Aorta (tissue), 5 donors: ENCODE measurements at regions of chr6 and their contacts with region 1.

Region 1: GRCh38 chr6:32984605-32985389 is 16.4 kb downstream of the BRD2 start:
- DNase-seq: peak; percentile 93 to 96
- ATAC-seq: peak; percentile 84
- H3K4me3 ChIP-seq: no peak overlapping the region
- H3K27ac ChIP-seq: no peak overlapping the region
- H3K4me1 ChIP-seq: no peaks in the 10 kb centered on the region
- H3K27me3 ChIP-seq: no peaks in the 10 kb centered on the region

Region 2: GRCh38 chr6:32829495-32829894 is 155.3 kb before region 1 on chr6:
- intact Hi-C with region 1: no loop called
- DNase-seq: no peak
- ATAC-seq: no peak
- H3K4me3 ChIP-seq: no peak overlapping the region
- H3K27ac ChIP-seq: no peak overlapping the region
- H3K4me1 ChIP-seq: no peaks in the 10 kb centered on the region
- H3K27me3 ChIP-seq: no peaks in the 10 kb centered on the region

Region 3: DNA sequence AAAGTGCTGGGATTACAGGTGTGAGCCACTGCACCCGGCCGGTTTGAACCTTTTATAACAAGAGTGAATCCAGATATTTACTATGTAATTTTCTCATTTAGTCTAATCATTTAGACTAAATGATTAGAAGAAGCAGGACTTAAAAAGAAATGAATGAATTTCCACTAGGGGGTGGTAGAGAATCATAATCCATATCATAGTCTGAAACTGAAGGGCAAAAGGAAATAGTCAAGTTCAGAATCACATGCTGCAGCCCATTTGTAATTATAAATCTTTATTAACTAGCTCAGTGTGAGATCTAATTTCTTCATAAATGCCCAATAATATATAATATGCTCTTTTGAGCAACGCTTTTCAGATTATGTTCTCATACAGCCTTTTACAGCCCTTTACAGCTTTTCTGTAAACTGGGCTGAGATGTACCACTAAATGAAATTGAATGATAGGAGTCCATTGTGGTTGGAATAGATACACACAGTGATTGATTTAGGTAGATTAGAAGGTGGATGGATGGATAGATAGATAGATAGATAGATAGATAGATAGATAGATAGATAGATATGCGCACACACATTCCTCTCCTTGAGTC is 99.0 kb before region 1 on chr6:
- intact Hi-C with region 1: loop called (anchors 1 to 2 kb)
- DNase-seq: no peak
- ATAC-seq: peak; percentile 69
- H3K4me3 ChIP-seq: no peak overlapping the region
- H3K27ac ChIP-seq: no peak overlapping the region
- H3K4me1 ChIP-seq: no peaks in the 10 kb centered on the region
- H3K27me3 ChIP-seq: no peaks in the 10 kb centered on the region

Region 4: DNA sequence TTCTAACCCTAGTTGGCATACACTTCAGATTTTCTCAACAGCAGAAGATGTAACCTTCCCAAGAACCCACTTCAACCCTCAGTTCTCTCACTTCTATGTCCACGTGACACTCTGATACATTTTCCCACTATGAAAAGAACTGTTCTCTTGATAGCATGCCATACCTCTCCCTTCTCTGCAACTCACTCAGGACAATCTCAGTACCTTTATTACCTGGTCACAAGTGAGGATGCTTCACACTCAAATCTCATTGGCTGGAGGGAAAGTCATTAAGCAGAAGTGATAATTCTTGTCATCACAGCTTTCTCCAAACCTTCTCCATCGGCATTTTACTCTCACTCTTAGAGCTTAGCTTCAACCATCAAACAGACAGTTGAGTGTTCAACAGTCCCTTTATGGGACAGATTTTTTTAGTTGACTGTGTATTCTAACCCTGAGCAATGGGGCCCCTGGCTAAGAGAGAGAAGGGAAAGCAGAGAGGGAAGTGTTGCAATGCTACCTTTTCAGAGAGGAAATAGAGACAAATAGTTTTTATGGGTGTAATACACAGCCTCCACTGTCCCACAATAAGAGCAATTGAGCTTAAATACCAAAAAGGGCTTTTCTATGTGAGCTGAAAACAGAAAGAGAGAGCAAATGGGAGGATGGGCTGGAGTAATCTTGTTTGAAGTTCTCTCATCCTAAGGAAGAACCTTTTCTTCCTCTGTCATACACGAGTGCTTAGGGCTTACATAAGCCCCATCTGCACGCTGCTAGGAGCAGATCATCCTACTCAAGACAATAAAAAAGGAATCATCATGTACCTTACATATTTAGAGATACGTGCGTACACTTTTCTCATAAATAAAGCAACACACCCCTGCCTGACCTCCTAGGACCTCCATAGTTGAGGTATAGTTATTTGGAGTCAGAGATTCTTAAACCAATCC is 72.7 kb after region 1 on chr6:
- intact Hi-C with region 1: no loop called
- DNase-seq: no peak
- ATAC-seq: no peak
- H3K4me3 ChIP-seq: peak overlapping the region in 1 of 2 donors; percentile 3
- H3K27ac ChIP-seq: no peak overlapping the region
- H3K4me1 ChIP-seq: no peaks in the 10 kb centered on the region
- H3K27me3 ChIP-seq: no peaks in the 10 kb centered on the region